ENCODE measurements at regions of chr21 and their contacts with region 1.

Region 1: GRCh38 chr21:17793246-17794123 is 25.7 kb downstream of the C21orf91 start:
- DNase-seq: no peak
- H3K4me3 Mint-ChIP-seq: peak overlapping the region; percentile 66
- H3K27ac Mint-ChIP-seq: peak overlapping the region; percentile 90
- H3K4me1 Mint-ChIP-seq: peaks cover 72% of the 10 kb centered on the region
- H3K27me3 Mint-ChIP-seq: no peaks in the 10 kb centered on the region

Region 2: DNA sequence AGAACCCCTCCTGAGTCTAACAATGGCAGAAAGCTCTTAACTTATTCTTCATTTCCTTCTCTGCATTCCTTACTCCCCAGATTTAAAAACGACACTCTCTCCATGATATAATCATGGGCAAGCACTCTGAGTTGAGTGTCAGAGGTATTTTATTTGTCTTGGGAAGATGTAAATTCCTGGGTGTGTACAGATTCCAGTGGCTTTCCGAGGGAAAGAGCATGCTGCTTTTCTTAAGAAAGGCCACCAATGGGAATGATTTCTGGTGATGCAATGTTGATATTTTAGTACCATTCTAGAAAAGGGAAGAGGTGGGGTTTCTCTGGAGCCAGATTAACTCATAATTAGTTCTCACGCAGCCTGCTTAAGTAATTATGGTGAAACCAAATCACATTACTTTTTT is 133.0 kb before region 1 on chr21:
- CTCF ChIA-PET with region 1: no interaction called
- DNase-seq: no peak
- H3K4me3 Mint-ChIP-seq: no peak overlapping the region
- H3K27ac Mint-ChIP-seq: no peak overlapping the region
- H3K4me1 Mint-ChIP-seq: no peaks in the 10 kb centered on the region
- H3K27me3 Mint-ChIP-seq: peaks cover 9% of the 10 kb centered on the region

Region 3: DNA sequence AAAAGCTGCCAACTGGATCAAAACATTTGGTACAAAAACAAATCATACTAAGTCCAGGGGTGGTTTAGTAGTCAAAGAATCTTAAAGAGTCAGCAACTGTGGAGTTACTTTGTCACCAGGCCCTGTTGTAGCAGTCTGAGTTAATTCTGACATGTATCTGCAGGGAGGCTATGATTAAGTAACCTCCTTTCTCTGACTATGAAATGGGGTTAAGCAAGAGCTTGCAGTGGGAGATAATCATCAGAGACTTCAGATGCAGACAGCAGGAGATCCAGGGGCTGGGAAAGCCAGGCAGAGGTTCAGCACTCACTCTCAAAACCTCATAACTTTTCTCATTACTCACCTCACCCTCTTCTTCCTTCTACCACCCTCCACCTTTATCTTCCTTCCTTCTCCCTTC is 81.6 kb before region 1 on chr21:
- CTCF ChIA-PET with region 1: no interaction called
- DNase-seq: no peak
- H3K4me3 Mint-ChIP-seq: no peak overlapping the region
- H3K27ac Mint-ChIP-seq: no peak overlapping the region
- H3K4me1 Mint-ChIP-seq: peaks cover 21% of the 10 kb centered on the region
- H3K27me3 Mint-ChIP-seq: no peaks in the 10 kb centered on the region

Region 4: DNA sequence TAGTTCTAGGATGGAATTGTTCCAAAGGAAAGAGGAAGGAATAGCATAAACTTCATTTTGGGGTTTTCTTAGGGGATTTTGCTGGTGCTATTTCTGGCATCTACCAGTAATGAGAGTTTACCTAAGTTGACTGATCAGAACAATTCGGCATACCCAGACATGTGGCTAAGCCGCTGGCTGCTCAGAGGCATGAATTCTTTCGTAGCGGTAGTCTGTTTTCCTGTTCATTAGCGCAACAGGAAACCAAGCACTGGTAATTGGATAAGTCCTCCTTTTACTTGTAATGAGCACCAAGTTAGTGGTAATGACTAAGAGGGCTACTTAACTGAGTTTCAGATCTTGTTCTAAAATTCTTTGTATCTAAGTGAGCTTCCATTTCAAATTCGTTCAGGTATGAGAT is 12.9 kb before region 1 on chr21:
- CTCF ChIA-PET with region 1: interaction called, 13 read pairs
- DNase-seq: peak; percentile 48
- H3K4me3 Mint-ChIP-seq: no peak overlapping the region
- H3K27ac Mint-ChIP-seq: peak overlapping the region; percentile 95
- H3K4me1 Mint-ChIP-seq: peaks cover 89% of the 10 kb centered on the region
- H3K27me3 Mint-ChIP-seq: no peaks in the 10 kb centered on the region

Region 5: DNA sequence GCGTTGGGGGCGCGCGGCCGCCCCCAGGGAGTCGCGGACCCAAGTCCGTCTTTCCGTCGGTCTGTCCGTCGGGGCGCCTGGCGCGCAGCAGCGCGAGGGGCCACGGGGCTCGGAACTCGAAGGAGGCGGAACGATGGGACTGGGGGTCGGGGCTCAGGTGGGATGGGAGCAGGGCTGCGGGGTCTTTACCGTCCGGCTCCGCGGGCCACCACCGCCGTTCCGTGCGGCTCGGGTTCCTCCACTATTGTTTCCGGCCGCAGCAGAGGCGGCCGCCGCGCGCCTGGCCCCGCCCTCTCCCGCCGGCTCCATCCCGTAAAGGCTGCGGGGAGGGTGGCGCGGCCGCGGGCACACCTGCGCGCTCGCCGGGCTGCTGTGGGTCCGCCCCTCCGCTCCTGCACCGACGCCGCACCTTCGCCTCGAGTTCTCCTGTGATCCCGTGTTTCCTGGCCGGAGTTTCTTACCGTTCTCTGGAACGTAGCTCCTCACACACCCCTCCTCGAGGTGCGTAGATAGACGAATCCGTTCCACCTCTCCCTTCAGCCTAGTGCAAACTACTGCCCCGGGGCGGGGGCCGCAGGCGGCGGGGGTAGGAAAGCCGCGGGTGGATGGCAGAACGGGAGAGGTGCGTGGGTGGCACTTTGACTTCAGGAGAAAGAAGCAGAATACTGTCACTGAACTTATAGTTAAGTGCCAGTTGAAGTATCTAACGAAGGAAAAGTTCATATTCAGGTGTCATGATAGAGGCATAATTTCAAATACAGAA is 25.8 kb after region 1 on chr21 and contains the start of gene C21orf91:
- CTCF ChIA-PET with region 1: interaction called, 10 read pairs
- DNase-seq: peak; percentile 93
- H3K4me3 Mint-ChIP-seq: peak within 1 kb of the TSS; percentile 88
- H3K27ac Mint-ChIP-seq: peak within 1 kb of the TSS; percentile 98
- H3K4me1 Mint-ChIP-seq: peaks cover 42% of the 10 kb centered on the region
- H3K27me3 Mint-ChIP-seq: no peaks in the 10 kb centered on the region

Measured in activated naive CD4-positive, alpha-beta T cell treated with anti-CD3 and anti-CD28 coated beads, Interleukin-2, amount 10 ng/mL, durations not matched to agents 7 days and 5 days (primary cell).